ENCODE measurements at regions of chr5 and their contacts with region 1.

Region 1: DNA sequence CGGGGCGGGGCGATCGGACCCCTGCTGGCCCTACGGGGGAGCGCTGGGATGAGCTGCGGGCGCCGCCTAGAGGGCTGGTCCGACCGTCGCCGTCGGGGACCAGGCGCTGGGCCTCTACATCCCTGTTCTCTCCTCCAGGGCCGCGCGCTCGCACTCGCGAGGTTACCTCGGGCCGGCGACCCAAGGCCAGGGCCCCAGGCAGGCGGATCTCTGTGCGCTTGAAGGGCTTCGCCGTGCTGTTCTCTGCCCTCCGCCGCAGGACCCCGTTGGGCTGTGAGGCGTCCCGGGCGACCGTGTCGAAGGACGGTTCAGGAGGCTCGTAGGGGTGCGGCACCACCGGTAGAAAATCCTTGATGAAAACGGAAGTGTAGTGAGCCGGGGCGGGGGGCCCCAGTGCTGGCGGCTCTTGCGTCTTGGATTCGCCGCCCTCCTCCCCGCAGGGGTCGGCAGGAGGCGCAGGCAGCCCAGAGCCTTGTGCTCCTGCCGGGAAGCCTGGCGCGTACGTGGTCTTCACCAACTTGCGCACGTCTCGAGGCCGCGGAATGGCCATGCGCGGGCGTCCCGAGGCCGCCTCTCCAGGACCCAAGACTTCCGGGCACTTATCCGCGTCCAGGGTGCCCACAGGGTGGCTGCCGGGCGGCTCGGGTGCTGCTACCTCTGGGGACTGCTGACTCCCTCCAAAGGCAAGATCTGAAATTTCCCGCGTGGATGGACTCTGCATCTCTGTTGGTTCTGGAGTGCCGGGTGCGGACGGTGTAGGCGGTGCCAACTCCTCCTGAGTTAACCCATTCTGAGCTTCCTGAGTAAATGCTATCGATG is 2.0 kb downstream of the PROB1 start:
- DNase-seq: peak; percentile 87

Region 2: GRCh38 chr5:139268364-139269202 is 124.3 kb before region 1 on chr5:
- intact Hi-C with region 1: loop called (anchors 5 kb)
- DNase-seq: no peak

Region 3: GRCh38 chr5:139293504-139294373 is 99.1 kb before region 1 on chr5 and contains the start of gene MATR3:
- intact Hi-C with region 1: loop called (anchors 5 kb)
- DNase-seq: peak; percentile 97
- total RNA-seq, gene MATR3: 170 TPM

Region 4: DNA sequence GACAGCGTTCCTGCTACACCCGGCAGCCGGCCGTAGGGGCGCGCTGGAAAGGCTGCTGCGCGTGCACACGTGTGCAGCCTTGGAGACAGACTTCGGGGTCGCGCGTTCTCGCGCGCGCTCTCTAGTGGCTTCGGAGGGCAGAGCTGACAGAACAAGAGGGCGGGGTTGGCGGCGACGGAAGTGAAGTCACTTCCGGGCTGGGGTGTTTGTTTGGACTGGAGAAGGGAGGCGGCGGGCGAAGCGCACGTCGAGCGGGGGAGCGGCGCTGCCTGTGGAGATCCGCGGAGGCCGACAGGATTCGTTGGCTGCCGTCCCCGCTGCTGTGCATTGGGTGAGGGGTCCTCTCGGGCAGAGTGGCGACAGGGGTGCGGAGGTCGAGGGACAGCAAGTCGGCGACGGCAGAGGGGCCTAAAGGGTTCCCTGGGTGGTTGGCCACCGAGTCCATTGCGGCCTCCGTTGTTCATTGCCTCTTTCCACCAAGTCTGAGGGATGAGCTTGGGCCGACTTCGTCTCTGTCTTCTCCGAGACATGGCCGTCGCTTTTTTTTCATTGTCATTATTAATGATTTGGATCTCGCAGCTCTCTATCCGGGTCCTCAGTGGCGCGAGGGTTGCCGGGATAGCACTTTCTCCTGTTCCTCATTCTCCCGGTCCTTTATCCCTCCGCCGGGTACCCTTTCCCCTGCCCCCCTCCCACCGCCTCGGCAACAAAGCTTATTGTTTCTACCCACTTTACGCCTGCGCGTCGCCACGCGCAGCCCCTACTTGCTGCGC is 51.1 kb before region 1 on chr5 and contains the start of gene PAIP2:
- intact Hi-C with region 1: loop called (anchors 5 kb)
- DNase-seq: peak; percentile 99
- total RNA-seq, gene PAIP2: 133 TPM

Region 5: GRCh38 chr5:139417214-139417613 is 24.3 kb after region 1 on chr5:
- intact Hi-C with region 1: loop called (anchors 2 kb)
- DNase-seq: no peak